Posterior vena cava (tissue), 2 donors: ENCODE measurements at regions of chr1 and their contacts with region 1.

Region 1: GRCh38 chr1:194372266-194372665 is 1185.9 kb upstream of the B3GALT2 start:
- DNase-seq: no peak

Region 2: DNA sequence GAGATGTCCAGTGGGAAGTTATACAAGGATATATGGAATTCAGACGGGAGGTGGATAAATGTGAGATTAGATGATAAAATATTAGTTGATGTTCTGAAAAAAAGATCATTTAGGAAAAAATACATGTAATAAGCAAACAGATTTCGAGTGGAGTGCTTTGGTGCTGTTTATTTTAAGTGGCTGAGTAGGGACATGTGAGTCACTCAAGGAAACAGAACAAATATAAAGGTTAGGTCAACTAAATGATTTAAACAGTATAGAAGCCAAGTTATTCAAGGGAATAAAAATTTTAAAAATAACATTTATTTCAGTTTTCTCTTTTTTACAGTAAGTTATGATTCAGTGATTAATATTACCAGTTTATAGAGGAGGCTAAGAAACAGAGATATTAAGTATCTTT is 139.2 kb before region 1 on chr1:
- intact Hi-C with region 1: loop called in 1 of 2 experiments (anchors 5 kb)
- DNase-seq: no peak